ENCODE measurements at regions of chr15 and their contacts with region 1.

Region 1: DNA sequence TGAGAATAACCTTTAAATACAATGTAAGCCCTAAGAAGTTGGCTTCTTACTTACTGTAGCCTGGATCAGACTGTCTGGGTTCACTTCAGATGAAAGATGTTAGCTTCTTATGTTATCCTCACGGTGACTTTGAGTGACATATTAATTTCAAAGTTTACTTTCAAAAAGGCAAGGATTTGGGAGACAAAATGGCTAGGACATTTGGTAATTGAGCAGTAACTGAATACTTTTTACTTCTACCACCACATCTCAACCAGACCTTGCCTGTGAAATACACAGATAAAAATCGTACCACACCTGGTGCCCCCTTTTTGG is 36.0 kb upstream of the BNIP2 start:
- DNase-seq: no peak
- ATAC-seq: no peak
- H3K4me3 Mint-ChIP-seq: no peak overlapping the region
- H3K27ac Mint-ChIP-seq: no peak overlapping the region
- H3K4me1 Mint-ChIP-seq: no peaks in the 10 kb centered on the region
- H3K27me3 Mint-ChIP-seq: no peaks in the 10 kb centered on the region

Region 2: DNA sequence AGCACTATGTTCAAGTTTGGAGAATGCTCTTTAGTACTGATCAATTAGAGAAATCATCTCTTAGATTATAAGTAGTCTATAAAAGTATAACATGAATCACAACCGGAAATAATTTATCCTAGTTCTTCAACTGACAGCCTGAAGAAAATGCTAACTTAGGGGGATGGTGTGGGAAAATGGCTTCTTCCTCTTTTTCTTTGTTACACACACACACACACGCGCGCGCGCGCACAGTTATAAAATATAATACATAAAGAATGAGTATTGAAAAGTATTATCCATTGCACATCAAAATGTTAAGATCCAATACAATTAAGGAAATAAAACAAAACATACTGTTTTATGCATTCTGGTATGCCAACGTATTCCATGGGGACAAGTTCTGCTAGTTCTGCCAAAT is 56.6 kb before region 1 on chr15:
- CTCF ChIA-PET with region 1: no interaction called
- POLR2A ChIA-PET with region 1: no interaction called
- intact Hi-C with region 1: no loop called
- DNase-seq: no peak
- ATAC-seq: no peak
- H3K4me3 Mint-ChIP-seq: no peak overlapping the region
- H3K27ac Mint-ChIP-seq: no peak overlapping the region
- H3K4me1 Mint-ChIP-seq: no peaks in the 10 kb centered on the region
- H3K27me3 Mint-ChIP-seq: no peaks in the 10 kb centered on the region

Region 3: GRCh38 chr15:59711451-59712243 is 13.5 kb before region 1 on chr15:
- CTCF ChIA-PET with region 1: interaction called, 12 read pairs
- POLR2A ChIA-PET with region 1: no interaction called
- intact Hi-C with region 1: no loop called
- DNase-seq: no peak
- ATAC-seq: no peak
- H3K4me3 Mint-ChIP-seq: no peak overlapping the region
- H3K27ac Mint-ChIP-seq: no peak overlapping the region
- H3K4me1 Mint-ChIP-seq: no peaks in the 10 kb centered on the region
- H3K27me3 Mint-ChIP-seq: no peaks in the 10 kb centered on the region

Region 4: DNA sequence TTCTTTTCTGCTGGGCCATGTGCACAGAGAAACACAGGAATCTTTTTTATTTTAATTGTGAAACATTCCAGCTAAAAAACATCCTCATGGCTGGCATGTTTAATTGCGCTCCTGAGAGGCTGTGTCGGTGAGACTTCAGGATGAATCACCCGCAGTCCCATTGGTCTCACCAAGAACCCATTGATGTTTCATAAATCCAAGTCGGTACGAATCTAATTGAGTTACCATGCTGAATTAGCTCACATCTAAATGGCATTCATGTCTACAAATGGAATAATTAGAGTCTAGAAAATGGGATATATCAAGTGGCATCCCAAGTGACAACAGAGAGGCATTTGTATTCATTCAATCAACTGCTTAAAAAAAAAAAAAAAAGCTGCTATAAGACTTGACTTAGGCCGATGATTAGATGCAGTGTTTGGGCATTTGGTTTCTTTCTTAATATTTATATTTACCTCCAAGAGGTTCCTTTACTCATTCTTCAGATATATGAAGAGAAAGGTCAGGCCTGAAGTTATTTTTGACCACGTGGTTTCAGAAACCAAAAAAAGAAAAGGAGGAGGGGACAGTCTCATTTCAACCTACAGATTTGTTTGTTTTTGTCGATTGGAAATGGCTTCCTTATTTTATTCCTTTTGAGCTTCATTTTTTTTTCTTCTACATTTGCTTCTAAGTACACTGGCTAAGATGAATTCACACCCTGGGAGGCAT is 199.8 kb after region 1 on chr15:
- CTCF ChIA-PET with region 1: no interaction called
- POLR2A ChIA-PET with region 1: no interaction called
- intact Hi-C with region 1: no loop called
- DNase-seq: no peak
- ATAC-seq: no peak
- H3K4me3 Mint-ChIP-seq: no peak overlapping the region
- H3K27ac Mint-ChIP-seq: peak overlapping the region; percentile 51
- H3K4me1 Mint-ChIP-seq: peaks cover 13% of the 10 kb centered on the region
- H3K27me3 Mint-ChIP-seq: peaks cover 11% of the 10 kb centered on the region

Measured in activated CD4-positive, alpha-beta T cell treated with anti-CD3 and anti-CD28 coated beads for 36 hours (primary cell).